ENCODE measurements at regions of chr9 and their contacts with region 1.

Region 1: GRCh38 chr9:31669311-31669710 is 715.1 kb upstream of the ACO1 start:
- DNase-seq: no peak
- H3K4me3 ChIP-seq: no peak overlapping the region
- H3K27ac ChIP-seq: no peak overlapping the region
- H3K4me1 ChIP-seq: no peaks in the 10 kb centered on the region
- H3K27me3 ChIP-seq: no peaks in the 10 kb centered on the region
- CTCF ChIP-seq: no peak
- POLR2A ChIP-seq: no peak

Region 2: DNA sequence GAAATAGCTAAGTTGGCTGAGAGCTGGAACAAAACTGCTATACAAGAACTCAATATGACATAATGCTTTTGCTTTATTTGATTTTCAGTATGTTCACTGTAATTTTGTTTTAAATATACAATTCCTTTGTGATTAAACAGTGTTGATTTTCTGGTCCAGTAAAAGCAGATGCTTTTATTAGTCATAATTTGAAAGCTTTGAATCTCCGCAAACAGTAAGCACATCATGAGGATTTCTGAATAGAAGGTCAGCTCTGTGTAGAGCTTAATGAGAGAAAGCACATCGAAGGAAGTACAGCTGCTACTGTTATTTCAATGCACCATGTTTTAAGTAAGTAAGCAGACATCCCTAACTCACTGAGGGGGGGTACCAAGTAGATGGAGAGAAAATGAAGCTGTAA is 13.8 kb after region 1 on chr9:
- intact Hi-C with region 1: no loop called
- DNase-seq: no peak
- H3K4me3 ChIP-seq: no peak overlapping the region
- H3K27ac ChIP-seq: no peak overlapping the region
- H3K4me1 ChIP-seq: no peaks in the 10 kb centered on the region
- H3K27me3 ChIP-seq: no peaks in the 10 kb centered on the region
- CTCF ChIP-seq: no peak
- POLR2A ChIP-seq: no peak

Region 3: GRCh38 chr9:32647671-32648070 is 978.4 kb after region 1 on chr9:
- intact Hi-C with region 1: loop called (anchors 10 kb)
- DNase-seq: no peak
- H3K4me3 ChIP-seq: no peak overlapping the region
- H3K27ac ChIP-seq: no peak overlapping the region
- H3K4me1 ChIP-seq: no peaks in the 10 kb centered on the region
- H3K27me3 ChIP-seq: no peaks in the 10 kb centered on the region
- CTCF ChIP-seq: no peak
- POLR2A ChIP-seq: no peak